Naive thymus-derived CD8-positive, alpha-beta T cell (primary cell): ENCODE measurements at regions of chr16 and their contacts with region 1.

Region 1: DNA sequence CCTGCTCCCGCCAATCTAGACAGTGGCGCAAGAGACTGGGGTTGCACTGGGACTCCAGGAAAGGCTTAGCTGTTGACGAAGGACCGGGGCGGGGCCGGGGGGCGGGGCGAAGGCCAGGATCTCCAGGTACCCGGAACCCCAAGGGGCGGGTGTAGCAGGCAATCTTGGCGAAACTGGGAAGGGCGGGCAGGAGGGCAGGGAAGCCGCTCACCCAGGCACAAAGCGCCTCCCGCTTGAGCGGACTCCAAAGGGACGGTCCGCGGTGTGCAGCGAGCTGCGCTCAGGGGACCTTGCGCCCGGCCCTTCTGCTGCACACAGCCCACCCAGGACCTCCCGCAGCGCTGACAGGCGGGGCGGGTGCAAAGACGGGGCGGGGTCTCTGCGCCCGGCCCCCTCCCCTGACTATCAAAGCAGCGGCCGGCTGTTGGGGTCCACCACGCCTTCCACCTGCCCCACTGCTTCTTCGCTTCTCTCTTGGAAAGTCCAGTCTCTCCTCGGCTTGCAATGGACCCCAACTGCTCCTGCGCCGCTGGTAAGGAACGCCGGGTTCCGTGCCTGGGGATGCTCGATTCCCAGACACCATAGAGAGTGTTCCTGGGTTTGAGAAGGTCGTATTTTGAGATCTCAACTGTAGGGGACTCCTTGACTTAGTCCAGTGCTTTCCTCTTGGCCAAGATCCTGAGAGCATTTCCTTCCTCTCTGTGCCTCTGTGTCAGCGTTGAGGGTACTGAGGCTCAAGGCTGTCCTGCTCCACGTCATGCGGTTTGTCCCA is at the start of gene MT1F:
- DNase-seq: peak; percentile 43 to 80 (median 68)
- ATAC-seq: peak; percentile 80 to 83
- H3K4me3 Mint-ChIP-seq: peak within 1 kb of the TSS; percentile 92 to 99 (median 97)
- H3K27ac Mint-ChIP-seq: peak within 1 kb of the TSS; percentile 87 to 98 (median 97)
- H3K4me1 Mint-ChIP-seq: peaks cover 23 to 46% (median 38%) of the 10 kb centered on the region in 4 donors
- H3K27me3 Mint-ChIP-seq: peaks cover 0 to 8% (median 2%) of the 10 kb centered on the region in 5 donors
- polyA plus RNA-seq, gene MT1F: 82.3 to 97.4 (median 94.2) TPM

Region 2: DNA sequence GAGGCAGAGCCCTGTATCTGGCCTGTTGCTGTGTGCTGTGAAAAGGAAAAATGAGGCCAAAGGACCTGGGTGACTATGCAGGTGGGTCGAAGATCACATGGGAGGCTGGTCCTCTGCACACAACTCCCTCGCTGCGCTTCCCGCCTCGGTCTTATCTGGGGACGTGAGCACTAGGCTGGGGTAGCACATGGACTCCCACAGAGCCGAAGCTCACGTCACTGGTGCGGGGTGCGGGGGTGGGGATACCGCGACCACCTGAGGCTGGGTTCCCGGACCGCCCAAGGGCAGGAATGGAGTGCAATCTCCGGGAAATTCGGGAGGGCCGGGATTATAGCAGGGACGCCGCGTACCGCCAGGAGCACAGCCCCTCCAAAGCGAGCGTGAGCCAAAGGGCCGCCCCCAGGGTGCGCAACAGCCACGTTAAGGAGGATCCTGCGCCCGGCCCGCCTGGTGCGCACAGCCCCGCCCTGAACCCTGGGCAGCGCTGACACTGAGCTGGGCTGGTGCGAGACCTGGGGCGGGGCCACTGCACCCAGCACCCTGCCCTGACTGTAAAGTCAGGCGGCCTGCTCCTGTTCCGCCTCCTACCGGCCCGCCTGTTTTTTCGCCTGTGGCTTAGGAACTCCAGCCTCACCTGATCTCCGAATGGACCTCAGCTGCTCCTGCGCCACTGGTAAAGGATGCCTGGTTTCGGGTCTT is 14.5 kb before region 1 on chr16:
- POLR2A ChIA-PET with region 1: interaction called, 11 read pairs
- DNase-seq: peak; percentile 53 to 85 (median 64)
- ATAC-seq: peak; percentile 98 to 100
- H3K4me3 Mint-ChIP-seq: peak overlapping the region; percentile 72 to 86 (median 80)
- H3K27ac Mint-ChIP-seq: peak overlapping the region in 9 of 10 donors; percentile 37 to 80 (median 72)
- H3K4me1 Mint-ChIP-seq: peaks cover 16 to 31% (median 19%) of the 10 kb centered on the region in 4 donors
- H3K27me3 Mint-ChIP-seq: peaks cover 19 to 39% (median 28%) of the 10 kb centered on the region in 5 donors

Region 3: GRCh38 chr16:56681939-56682702 is 24.4 kb after region 1 on chr16 and contains the start of gene MT1X:
- POLR2A ChIA-PET with region 1: interaction called, 18 read pairs
- DNase-seq: peak; percentile 77 to 94 (median 86)
- ATAC-seq: peak; percentile 98 to 99
- H3K4me3 Mint-ChIP-seq: peak within 1 kb of the TSS; percentile 94 to 99 (median 96)
- H3K27ac Mint-ChIP-seq: peak within 1 kb of the TSS; percentile 94 to 99 (median 98)
- H3K4me1 Mint-ChIP-seq: peaks cover 17 to 36% (median 28%) of the 10 kb centered on the region in 4 donors
- H3K27me3 Mint-ChIP-seq: no peaks in the 10 kb centered on the region
- polyA plus RNA-seq, gene MT1X: 185 to 201 (median 201) TPM

Region 4: DNA sequence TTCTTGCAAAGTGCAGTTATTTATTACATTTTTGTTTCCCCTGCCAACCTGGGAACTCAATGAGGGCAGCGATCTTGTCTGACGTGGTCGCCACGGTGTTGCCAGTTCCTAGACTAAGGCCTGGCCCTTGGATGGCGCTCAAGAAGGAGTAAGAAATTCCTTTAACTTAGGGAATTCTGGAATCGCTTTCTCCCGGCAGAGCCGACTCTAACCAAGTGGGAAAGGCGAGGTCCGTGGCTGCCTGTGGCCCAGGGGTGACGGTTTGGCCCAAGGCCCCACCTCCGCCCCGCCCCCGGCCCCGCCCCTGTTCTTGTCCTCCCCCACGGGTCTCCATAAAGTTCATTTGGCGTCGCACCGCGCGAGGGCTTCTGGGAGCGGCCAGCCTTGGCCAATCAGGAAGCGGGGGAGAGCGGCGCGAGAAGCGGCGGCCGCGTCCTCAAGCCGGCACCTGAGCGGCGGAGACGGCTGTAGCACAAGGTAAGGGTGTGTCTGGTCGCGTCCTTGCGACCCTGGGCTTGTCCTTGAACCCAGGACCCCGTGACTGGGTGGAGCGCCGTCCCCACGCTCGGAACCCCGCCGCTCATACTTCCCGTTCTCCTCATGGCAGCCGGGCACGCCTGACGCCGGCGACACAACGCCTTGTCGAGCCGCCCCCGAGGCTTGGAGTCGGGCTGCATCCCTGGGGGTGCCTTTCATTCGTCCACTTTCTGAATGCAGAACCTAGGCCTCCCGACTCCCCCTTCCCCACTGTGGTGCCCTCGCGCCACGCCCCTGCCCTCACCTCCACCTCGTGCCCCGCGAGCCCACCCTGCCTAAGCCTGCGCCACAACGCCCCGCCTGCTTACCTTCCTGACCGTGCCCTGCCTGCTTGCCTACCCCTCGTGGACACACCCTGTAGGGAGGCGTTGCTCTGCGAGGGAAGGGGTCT is 72.3 kb after region 1 on chr16 and contains the start of gene NUP93:
- POLR2A ChIA-PET with region 1: no interaction called
- DNase-seq: peak; percentile 83 to 95 (median 86)
- ATAC-seq: peak; percentile 96
- H3K4me3 Mint-ChIP-seq: peak within 1 kb of the TSS in 1 of 10 donors; percentile 95
- H3K27ac Mint-ChIP-seq: peak within 1 kb of the TSS in 8 of 10 donors; percentile 90 to 98 (median 93)
- H3K4me1 Mint-ChIP-seq: peaks cover 14 to 30% (median 22%) of the 10 kb centered on the region in 4 donors
- H3K27me3 Mint-ChIP-seq: no peaks in the 10 kb centered on the region
- polyA plus RNA-seq, gene NUP93: 66.6 to 104 (median 77.5) TPM